Right ventricle myocardium superior (tissue), 1 donor: ENCODE measurements at regions of chr19 and their contacts with region 1.

Region 1: GRCh38 chr19:28466107-28467045 is 746.6 kb downstream of the UQCRFS1 start:
- DNase-seq: peak; percentile 70
- ATAC-seq: peak; percentile 61

Region 2: DNA sequence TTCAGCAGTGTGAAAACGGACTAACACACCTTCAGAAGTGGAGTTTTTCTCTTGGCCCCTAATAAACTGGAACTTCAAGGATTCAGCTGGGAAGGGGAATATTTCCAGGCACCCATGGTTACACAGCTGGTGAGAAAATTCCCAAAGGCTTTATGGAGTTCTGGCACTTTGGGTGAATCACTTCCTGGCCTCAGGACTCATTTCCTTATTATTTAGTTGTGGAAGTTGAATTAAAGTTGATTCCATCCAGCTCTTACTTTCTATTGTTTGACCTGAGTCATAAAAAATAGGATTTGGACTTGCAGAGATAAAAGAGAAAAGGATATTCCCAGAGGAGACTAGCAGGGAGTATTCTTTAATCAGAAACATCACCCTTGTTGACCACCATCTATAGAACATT is 135.5 kb before region 1 on chr19:
- intact Hi-C with region 1: no loop called
- DNase-seq: no peak
- ATAC-seq: no peak

Region 3: DNA sequence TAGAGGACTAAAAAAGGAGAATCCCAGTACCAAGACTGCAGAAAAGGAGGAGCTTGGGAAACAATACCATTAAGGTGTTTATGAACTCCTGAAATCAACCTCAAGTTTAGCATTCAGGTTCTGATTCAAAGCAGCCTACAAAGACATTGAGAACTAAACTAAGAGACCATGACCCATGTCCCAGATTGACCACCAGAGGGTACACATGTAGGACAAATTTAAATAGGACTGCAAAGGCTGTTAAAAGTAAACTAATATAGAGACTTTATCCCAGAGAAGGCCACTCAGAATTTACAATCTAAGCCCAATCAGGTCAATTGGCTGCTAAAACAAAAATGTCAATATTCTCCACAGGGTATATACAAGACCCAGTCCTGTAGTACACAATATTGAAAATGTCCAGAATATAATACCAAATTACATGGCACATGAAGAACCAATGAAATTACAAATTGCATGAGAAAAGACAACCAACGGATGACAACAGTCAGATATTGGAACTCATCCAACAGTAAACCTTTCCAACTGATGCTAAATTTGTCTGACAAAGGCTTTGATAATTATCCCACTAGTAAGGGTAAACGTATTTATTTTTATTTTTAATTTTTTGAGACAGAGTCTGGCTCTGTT is 64.1 kb after region 1 on chr19:
- intact Hi-C with region 1: no loop called
- DNase-seq: no peak
- ATAC-seq: no peak

Region 4: DNA sequence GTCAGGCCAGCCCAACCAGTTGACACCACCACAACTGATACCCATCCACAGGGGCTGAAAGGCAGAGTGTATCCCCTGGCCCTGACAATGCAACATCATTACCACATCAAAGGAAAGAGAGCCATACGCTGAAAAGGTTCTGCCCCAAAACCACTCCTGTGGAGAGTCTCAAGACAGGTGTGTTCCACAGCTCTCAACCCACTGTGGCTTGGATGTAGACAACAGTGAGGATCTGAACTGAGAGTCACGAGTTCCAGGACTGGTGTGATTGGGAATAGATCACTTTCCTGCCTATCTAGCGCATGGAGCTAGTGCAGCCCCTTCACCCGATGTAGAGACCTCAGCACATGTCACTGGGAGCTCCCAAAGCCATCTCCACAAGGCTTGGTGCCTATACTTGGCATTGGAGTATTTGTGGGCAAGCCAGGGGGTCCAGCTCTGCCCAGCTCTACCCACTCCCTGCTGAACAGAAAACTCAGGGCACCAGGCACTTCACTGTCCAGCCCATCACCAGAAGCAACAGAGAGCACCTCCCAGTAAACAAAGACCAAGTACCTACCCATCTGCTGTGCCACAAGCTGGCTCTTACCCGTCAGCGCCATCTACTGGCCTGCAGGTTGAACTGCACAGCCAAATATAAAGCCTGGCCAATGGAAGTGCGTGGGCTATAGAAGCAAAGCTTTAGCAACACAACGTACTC is 167.1 kb after region 1 on chr19:
- intact Hi-C with region 1: loop called (anchors 5 kb)
- DNase-seq: peak; percentile 48
- ATAC-seq: peak; percentile 46

Region 5: GRCh38 chr19:28710278-28710677 is 243.9 kb after region 1 on chr19:
- intact Hi-C with region 1: loop called (anchors 2 kb)
- DNase-seq: no peak
- ATAC-seq: no peak

Region 6: GRCh38 chr19:28878862-28879566 is 412.6 kb after region 1 on chr19:
- intact Hi-C with region 1: loop called (anchors 5 kb)
- DNase-seq: peak; percentile 71
- ATAC-seq: peak; percentile 36